ENCODE measurements at regions of chr11 and their contacts with region 1.

Region 1: GRCh38 chr11:64458997-64459396 is 100.0 kb downstream of the RPS6KA4 start:
- DNase-seq: no peak
- H3K4me3 ChIP-seq: no peak overlapping the region
- H3K27ac ChIP-seq: no peak overlapping the region
- H3K4me1 ChIP-seq: no peaks in the 10 kb centered on the region
- H3K27me3 ChIP-seq: no peaks in the 10 kb centered on the region
- CTCF ChIP-seq: no peak

Region 2: DNA sequence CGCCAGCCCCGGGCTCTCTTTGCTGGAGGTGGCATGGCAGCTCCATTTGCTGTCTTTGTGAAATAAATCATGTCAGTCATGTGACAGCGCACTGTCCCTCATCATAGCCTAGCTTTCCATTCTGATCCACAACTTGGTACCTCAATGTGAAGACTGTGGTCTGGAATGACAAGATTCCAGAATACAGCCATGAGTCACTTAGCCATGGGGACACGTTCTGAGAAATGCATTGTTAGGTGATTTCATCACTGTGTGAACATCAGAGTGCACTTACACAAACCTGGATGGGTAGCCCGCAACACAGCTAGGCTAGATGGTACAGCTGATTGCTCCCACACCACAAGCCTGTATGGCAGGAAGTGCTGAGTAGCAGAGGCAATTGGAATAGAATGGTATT is 72.7 kb before region 1 on chr11:
- CTCF ChIA-PET with region 1: no interaction called
- dilution Hi-C with region 1: loop called (anchors 5 kb)
- in situ Hi-C with region 1: no loop called
- intact Hi-C with region 1: no loop called
- DNase-seq: peak; percentile 83
- H3K4me3 ChIP-seq: no peak overlapping the region
- H3K27ac ChIP-seq: no peak overlapping the region
- H3K4me1 ChIP-seq: peaks cover 15% of the 10 kb centered on the region
- H3K27me3 ChIP-seq: peaks cover 2% of the 10 kb centered on the region
- CTCF ChIP-seq: no peak

Region 3: GRCh38 chr11:64506731-64507130 is 47.7 kb after region 1 on chr11:
- CTCF ChIA-PET with region 1: no interaction called
- dilution Hi-C with region 1: loop called (anchors 5 kb)
- in situ Hi-C with region 1: no loop called
- intact Hi-C with region 1: no loop called
- DNase-seq: no peak
- H3K4me3 ChIP-seq: no peak overlapping the region
- H3K27ac ChIP-seq: no peak overlapping the region
- H3K4me1 ChIP-seq: no peaks in the 10 kb centered on the region
- H3K27me3 ChIP-seq: no peaks in the 10 kb centered on the region
- CTCF ChIP-seq: no peak

Measured in mammary epithelial cell (primary cell).